Left lung (tissue), 14 donors: ENCODE measurements at regions of chr6 and their contacts with region 1.

Region 1: GRCh38 chr6:44630125-44631028 is 242.9 kb downstream of the CDC5L start:
- DNase-seq: peak in 2 of 4 donors; percentile 42 to 78
- ATAC-seq: peak; percentile 63
- H3K4me3 ChIP-seq: no peak overlapping the region
- H3K27ac ChIP-seq: no peak overlapping the region
- H3K4me1 ChIP-seq: no peaks in the 10 kb centered on the region
- H3K27me3 ChIP-seq: peaks cover 0 to 12% of the 10 kb centered on the region in 2 donors
- CTCF ChIP-seq: peak in 1 of 2 donors; percentile 27

Region 2: GRCh38 chr6:44805238-44805846 is 175.0 kb after region 1 on chr6:
- intact Hi-C with region 1: no loop called
- DNase-seq: no peak
- ATAC-seq: peak; percentile 32
- H3K4me3 ChIP-seq: no peak overlapping the region
- H3K27ac ChIP-seq: no peak overlapping the region
- H3K4me1 ChIP-seq: no peaks in the 10 kb centered on the region
- H3K27me3 ChIP-seq: no peaks in the 10 kb centered on the region
- CTCF ChIP-seq: no peak

Region 3: DNA sequence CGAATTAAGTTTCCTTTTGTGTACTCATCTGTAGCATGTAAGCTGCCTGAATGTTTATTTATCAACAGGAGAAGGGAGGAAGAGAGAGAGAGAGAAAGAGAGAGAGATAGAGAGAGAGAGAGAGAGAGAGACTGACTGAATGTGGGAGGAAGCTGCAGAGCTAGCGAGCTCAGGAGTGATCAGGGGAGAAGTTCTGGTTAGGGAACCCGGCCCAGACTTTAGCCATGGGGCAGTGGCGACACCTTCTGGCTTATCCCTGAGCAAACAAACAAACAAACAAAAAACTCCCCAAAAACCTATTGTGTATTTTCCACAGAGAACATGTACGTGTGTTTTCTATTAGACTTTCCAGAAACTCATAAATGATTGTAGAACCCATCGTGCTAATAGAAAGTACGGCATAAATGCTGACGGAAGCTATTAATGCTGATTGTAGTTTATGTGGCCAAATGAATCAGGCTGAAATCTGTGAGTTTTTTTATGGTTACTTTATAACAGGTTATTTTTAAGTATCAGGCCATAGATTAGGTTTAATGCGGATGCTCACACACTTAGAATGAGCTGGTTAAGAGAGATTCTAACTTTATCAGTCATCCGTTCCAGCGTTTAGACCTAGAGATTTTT is 1292.5 kb after region 1 on chr6:
- intact Hi-C with region 1: loop called in 1 of 2 experiments (anchors 10 kb)
- DNase-seq: peak in 3 of 4 donors; percentile 65 to 76 (median 72)
- ATAC-seq: peak; percentile 72
- H3K4me3 ChIP-seq: no peak overlapping the region
- H3K27ac ChIP-seq: no peak overlapping the region
- H3K4me1 ChIP-seq: no peaks in the 10 kb centered on the region
- H3K27me3 ChIP-seq: no peaks in the 10 kb centered on the region
- CTCF ChIP-seq: peak; percentile 26 to 42